SK-N-SH (cell line): ENCODE measurements at regions of chr9 and their contacts with region 1.

Region 1: DNA sequence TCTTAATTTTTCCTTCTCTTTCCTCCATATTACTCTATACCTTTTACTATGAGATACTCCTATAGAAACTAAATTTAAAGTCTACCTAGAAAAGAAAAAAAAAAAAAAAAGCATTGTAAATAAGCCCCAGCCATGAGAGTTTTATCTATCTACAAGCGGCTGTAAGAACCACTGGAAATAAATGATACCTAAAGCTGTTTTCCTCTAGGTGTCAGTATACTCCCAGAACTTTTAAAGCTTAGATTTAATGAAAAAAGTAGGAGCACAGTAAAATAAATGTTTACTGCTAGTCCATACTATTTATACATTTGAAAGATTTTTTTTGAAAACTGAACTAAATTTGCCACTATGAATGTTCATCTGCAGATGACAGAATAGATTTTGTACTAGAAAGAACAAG is 26.2 kb downstream of the TYRP1 start:
- DNase-seq: peak; percentile 22
- H3K4me3 ChIP-seq: no peak overlapping the region; a peak in 1 of 4 replicates
- H3K27ac ChIP-seq: no peak overlapping the region; a peak in 1 of 4 replicates
- H3K4me1 ChIP-seq: peaks cover 0 to 7% of the 10 kb centered on the region in 2 experiments; a peak in 2 of 4 replicates
- H3K27me3 ChIP-seq: no peaks in the 10 kb centered on the region
- CTCF ChIP-seq: peak; percentile 74
- EP300 ChIP-seq: no peak
- RAD21 ChIP-seq: peak; percentile 70

Region 2: GRCh38 chr9:12708562-12709298 is 10.7 kb before region 1 on chr9:
- CTCF ChIA-PET with region 1: interaction called, 10 read pairs
- POLR2A ChIA-PET with region 1: no interaction called
- DNase-seq: no peak
- H3K4me3 ChIP-seq: no peak overlapping the region
- H3K27ac ChIP-seq: peak overlapping the region; percentile 73 to 87; a peak in 3 of 4 replicates
- H3K4me1 ChIP-seq: no peaks in the 10 kb centered on the region; a peak in 2 of 4 replicates
- H3K27me3 ChIP-seq: no peaks in the 10 kb centered on the region
- CTCF ChIP-seq: no peak
- EP300 ChIP-seq: peak in 1 of 2 experiments; percentile 94; a peak in 3 of 4 replicates
- RAD21 ChIP-seq: no peak

Region 3: GRCh38 chr9:12775679-12776512 is 56.5 kb after region 1 on chr9:
- CTCF ChIA-PET with region 1: interaction called, 17 read pairs
- POLR2A ChIA-PET with region 1: interaction called, 3 read pairs
- DNase-seq: peak; percentile 81
- H3K4me3 ChIP-seq: peak overlapping the region; percentile 74 to 75
- H3K27ac ChIP-seq: peak overlapping the region; percentile 64 to 87; a peak in 3 of 4 replicates
- H3K4me1 ChIP-seq: peaks cover 0 to 5% of the 10 kb centered on the region in 2 experiments; a peak in 2 of 4 replicates
- H3K27me3 ChIP-seq: no peaks in the 10 kb centered on the region
- CTCF ChIP-seq: peak; percentile 60
- EP300 ChIP-seq: no peak; a peak in 1 of 4 replicates
- RAD21 ChIP-seq: peak; percentile 74

Region 4: GRCh38 chr9:12878356-12878978 is 159.0 kb after region 1 on chr9:
- CTCF ChIA-PET with region 1: interaction called, 20 read pairs
- POLR2A ChIA-PET with region 1: no interaction called
- DNase-seq: no peak
- H3K4me3 ChIP-seq: no peak overlapping the region
- H3K27ac ChIP-seq: no peak overlapping the region
- H3K4me1 ChIP-seq: no peaks in the 10 kb centered on the region; a peak in 2 of 4 replicates
- H3K27me3 ChIP-seq: no peaks in the 10 kb centered on the region
- CTCF ChIP-seq: no peak
- EP300 ChIP-seq: no peak
- RAD21 ChIP-seq: no peak

Region 5: GRCh38 chr9:13047827-13048587 is 328.6 kb after region 1 on chr9:
- CTCF ChIA-PET with region 1: no interaction called
- POLR2A ChIA-PET with region 1: no interaction called
- DNase-seq: no peak
- H3K4me3 ChIP-seq: no peak overlapping the region
- H3K27ac ChIP-seq: no peak overlapping the region
- H3K4me1 ChIP-seq: no peaks in the 10 kb centered on the region
- H3K27me3 ChIP-seq: no peaks in the 10 kb centered on the region
- CTCF ChIP-seq: no peak
- EP300 ChIP-seq: no peak
- RAD21 ChIP-seq: no peak

Region 6: DNA sequence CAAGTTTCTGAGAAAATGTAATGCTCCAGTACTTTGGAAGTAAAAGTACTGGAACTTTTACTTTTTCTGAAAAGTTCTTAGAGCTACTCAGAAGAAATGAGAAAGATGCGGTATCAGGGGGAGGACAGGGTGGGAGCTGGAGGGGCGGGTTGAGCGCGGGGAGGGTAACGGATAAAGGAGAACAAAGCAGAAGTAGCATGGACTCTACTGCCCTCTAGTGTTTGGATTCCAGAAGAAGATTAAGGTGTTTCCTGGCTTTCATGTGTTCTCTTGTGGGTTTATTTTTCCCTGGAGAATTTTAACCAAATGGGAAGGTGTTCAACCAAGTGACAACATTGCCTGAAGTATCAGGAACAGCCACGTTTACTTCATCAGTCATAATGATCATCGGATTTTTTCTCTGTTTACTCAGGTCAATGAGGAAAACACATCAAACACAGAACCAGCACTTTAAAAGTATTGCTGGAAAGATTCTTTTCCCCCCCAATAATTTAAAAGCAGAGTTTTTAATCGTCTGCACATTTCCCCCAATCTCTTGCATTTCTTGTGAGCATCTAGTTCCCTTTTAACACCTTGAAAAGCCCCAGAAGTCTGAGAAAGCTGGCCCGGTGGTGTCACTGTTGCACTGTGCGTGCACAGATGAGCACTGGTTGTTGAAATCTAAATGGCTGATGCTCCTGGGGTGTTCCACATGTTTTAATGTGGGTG is 369.4 kb after region 1 on chr9:
- CTCF ChIA-PET with region 1: interaction called, 26 read pairs
- POLR2A ChIA-PET with region 1: no interaction called
- DNase-seq: peak; percentile 79
- H3K4me3 ChIP-seq: peak overlapping the region in 1 of 2 experiments; percentile 49; a peak in 2 of 4 replicates
- H3K27ac ChIP-seq: no peak overlapping the region
- H3K4me1 ChIP-seq: peaks cover 0 to 2% of the 10 kb centered on the region in 2 experiments; a peak in 2 of 4 replicates
- H3K27me3 ChIP-seq: no peaks in the 10 kb centered on the region
- CTCF ChIP-seq: peak; percentile 74
- EP300 ChIP-seq: no peak
- RAD21 ChIP-seq: peak; percentile 78